Thyroid gland (tissue), 4 donors: ENCODE measurements at regions of chr1 and their contacts with region 1.

Region 1: GRCh38 chr1:236603991-236604904 is at the start of gene HEATR1:
- DNase-seq: peak; percentile 93 to 94
- H3K4me3 ChIP-seq: peak within 1 kb of the TSS; percentile 62 to 81 (median 63)
- H3K27ac ChIP-seq: peak within 1 kb of the TSS; percentile 48 to 75 (median 60)
- H3K4me1 ChIP-seq: peaks cover 10 to 16% of the 10 kb centered on the region in 2 donors
- H3K27me3 ChIP-seq: no peaks in the 10 kb centered on the region
- CTCF ChIP-seq: no peak
- POLR2A ChIP-seq: peak in 1 of 2 donors; percentile 41
- total RNA-seq, gene HEATR1: 23.0 to 37.5 (median 25.5) TPM

Region 2: GRCh38 chr1:236795035-236795756 is 190.9 kb after region 1 on chr1 and contains the start of gene MTR:
- intact Hi-C with region 1: loop called (anchors 10 kb)
- DNase-seq: peak; percentile 99
- H3K4me3 ChIP-seq: peak within 1 kb of the TSS; percentile 41 to 98 (median 78)
- H3K27ac ChIP-seq: peak within 1 kb of the TSS; percentile 70 to 93 (median 85)
- H3K4me1 ChIP-seq: peaks cover 25 to 31% of the 10 kb centered on the region in 2 donors
- H3K27me3 ChIP-seq: no peaks in the 10 kb centered on the region
- CTCF ChIP-seq: no peak
- POLR2A ChIP-seq: peak; percentile 77 to 94
- total RNA-seq, gene MTR: 43.2 to 78.3 (median 47.0) TPM